ENCODE measurements at regions of chr4 and their contacts with region 1.

Region 1: GRCh38 chr4:105135785-105136184 is 10.9 kb upstream of the TET2 start:
- DNase-seq: no peak
- H3K4me3 ChIP-seq: no peak overlapping the region
- H3K27ac ChIP-seq: no peak overlapping the region
- H3K4me1 ChIP-seq: no peaks in the 10 kb centered on the region
- H3K27me3 ChIP-seq: no peaks in the 10 kb centered on the region
- CTCF ChIP-seq: no peak
- EP300 ChIP-seq: no peak
- POLR2A ChIP-seq: no peak

Region 2: DNA sequence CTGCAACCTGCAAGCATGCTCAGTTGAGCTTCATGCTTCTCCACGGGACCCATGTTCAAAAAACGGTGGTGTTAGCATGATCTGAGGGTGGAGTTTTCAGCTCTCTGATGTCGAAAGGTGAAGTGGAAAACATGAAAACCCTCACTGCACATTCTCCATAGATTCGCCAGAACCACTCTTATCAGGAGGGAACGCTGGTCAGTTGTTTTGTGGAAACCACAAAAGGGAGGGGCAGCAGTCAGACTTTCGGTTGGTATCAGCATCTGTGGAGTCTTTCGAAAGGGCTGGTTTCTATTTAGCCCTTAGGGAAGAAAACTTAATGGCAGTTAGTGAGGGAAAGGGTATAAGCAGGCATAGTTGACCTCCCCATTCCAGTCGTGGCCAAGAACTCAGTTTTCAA is 325.4 kb after region 1 on chr4:
- in situ Hi-C with region 1: loop called in 3 of 4 experiments (anchors 5 to 10 kb)
- intact Hi-C with region 1: no loop called
- DNase-seq: no peak
- H3K4me3 ChIP-seq: no peak overlapping the region
- H3K27ac ChIP-seq: no peak overlapping the region
- H3K4me1 ChIP-seq: peaks cover 0 to 6% (median 0%) of the 10 kb centered on the region in 4 donors
- H3K27me3 ChIP-seq: no peaks in the 10 kb centered on the region
- CTCF ChIP-seq: no peak
- EP300 ChIP-seq: no peak
- POLR2A ChIP-seq: no peak

Measured in transverse colon (tissue), 4 donors.